Caco-2 (cell line): ENCODE measurements at regions of chr17 and their contacts with region 1.

Region 1: DNA sequence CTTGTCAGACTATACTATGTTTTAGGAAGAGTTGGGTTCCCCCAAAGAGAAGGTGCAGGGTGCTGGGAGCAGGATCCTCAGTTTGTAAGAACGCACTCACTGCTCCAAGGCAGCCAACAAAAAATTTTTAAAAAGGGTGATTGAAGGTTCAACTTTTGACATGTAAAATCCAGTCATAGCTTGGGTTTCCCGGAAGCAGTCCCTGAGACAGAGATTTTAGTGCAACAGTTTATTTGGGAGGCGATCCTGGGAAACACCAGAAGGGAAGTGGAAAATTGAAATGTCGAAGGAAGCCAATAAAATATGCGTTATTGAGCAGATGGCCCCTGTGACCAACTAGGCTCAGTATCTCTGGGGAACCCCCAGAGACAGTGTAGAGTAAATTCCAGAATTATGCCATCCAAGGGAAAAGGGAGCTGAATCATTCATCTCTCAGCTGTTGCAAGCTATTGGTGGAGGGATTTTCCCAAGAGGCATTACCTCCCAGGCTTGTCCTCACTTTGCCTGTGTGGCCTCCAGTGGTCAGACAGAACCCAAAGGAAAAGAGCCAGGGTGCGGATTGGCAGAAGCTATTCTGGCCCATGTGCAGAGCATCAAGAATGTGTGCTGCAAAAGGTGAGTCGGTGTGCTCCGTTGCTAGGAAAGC is 72.9 kb downstream of the HS3ST3B1 start:
- DNase-seq: no peak
- H3K4me3 ChIP-seq: no peak overlapping the region
- H3K4me3 Mint-ChIP-seq: no peak overlapping the region
- H3K27ac Mint-ChIP-seq: peak overlapping the region; percentile 50
- H3K4me1 ChIP-seq: 0 out of 2 replicates have a peak, but pooled peaks cover 8% of the 10 kb centered on the region
- H3K4me1 Mint-ChIP-seq: peaks cover 15% of the 10 kb centered on the region
- H3K27me3 ChIP-seq: no peaks in the 10 kb centered on the region
- H3K27me3 Mint-ChIP-seq: no peaks in the 10 kb centered on the region
- CTCF ChIP-seq: no peak

Region 2: DNA sequence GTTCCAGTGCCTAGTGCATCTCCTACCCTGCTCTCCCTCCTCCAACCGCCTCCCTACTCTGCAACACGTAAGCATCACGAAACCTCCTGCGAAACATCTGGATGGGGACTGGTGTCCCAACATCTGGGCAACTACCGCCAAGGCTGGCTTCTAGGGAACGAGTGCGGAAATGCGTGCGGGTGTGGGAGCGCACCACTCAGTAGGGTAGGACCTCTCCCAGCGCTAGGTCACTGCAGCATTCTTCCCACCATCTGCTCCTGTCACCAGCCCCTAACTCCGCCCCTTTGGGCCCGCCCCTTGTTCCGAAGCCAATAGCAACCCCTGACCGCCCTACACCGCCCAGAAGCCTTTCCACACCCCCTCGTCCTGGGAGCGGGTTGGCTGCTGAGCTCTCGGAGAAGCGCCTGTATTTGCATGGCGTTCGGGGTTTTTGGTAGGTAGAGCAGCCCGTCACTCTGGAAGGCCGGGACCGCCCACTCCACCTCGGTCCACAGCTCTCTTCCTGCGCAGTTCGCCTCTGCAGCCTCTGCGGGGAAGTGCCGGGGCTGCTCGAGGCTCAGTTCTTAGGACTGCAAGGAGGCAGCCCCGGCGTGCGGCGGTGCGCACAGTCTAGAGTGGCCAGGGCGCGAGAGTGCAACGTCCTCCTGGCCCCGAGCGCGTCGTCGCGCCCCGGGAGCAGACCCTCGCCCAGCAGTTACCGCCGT is 73.0 kb before region 1 on chr17 and contains the start of gene HS3ST3B1:
- CTCF ChIA-PET with region 1: no interaction called
- POLR2A ChIA-PET with region 1: no interaction called
- intact Hi-C with region 1: loop called (anchors 10 kb)
- DNase-seq: peak; percentile 96 to 97
- H3K4me3 ChIP-seq: peak within 1 kb of the TSS; percentile 57
- H3K4me3 Mint-ChIP-seq: peak within 1 kb of the TSS; percentile 79
- H3K27ac Mint-ChIP-seq: no peak within 1 kb of the TSS
- H3K4me1 ChIP-seq: no peaks in the 10 kb centered on the region
- H3K4me1 Mint-ChIP-seq: no peaks in the 10 kb centered on the region
- H3K27me3 ChIP-seq: no peaks in the 10 kb centered on the region; the same call in 1 of the 2 replicates
- H3K27me3 Mint-ChIP-seq: peaks cover 7% of the 10 kb centered on the region
- CTCF ChIP-seq: peak in 1 of 2 experiments; percentile 0
- total RNA-seq, gene HS3ST3B1: 1.8 and 1.9 TPM in 2 replicates

Region 3: DNA sequence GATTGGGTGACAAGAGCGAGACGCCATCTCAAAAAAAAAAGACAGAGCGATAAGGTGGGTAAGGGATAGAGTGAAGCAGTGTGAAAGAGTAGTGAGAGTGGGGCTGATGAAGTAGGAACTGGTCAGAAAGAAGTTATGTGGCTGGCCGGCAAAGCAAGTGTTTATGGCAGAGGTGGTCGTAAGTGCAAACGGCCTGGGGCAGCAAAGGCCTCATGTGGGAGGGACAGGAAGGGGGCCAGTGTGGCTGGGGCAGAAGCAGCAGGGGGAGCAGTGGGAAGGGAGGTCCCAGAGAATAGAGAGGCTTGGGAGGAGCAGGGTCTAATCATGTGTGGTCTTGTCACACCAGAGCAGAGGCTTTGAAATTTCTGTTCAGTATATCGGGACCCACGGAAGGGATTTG is 113.3 kb after region 1 on chr17:
- CTCF ChIA-PET with region 1: no interaction called
- POLR2A ChIA-PET with region 1: no interaction called
- intact Hi-C with region 1: no loop called
- DNase-seq: no peak
- H3K4me3 ChIP-seq: no peak overlapping the region
- H3K4me3 Mint-ChIP-seq: no peak overlapping the region
- H3K27ac Mint-ChIP-seq: no peak overlapping the region
- H3K4me1 ChIP-seq: no peaks in the 10 kb centered on the region
- H3K4me1 Mint-ChIP-seq: no peaks in the 10 kb centered on the region
- H3K27me3 ChIP-seq: no peaks in the 10 kb centered on the region
- H3K27me3 Mint-ChIP-seq: no peaks in the 10 kb centered on the region
- CTCF ChIP-seq: no peak